ENCODE measurements at regions of chr13 and their contacts with region 1.

Region 1: DNA sequence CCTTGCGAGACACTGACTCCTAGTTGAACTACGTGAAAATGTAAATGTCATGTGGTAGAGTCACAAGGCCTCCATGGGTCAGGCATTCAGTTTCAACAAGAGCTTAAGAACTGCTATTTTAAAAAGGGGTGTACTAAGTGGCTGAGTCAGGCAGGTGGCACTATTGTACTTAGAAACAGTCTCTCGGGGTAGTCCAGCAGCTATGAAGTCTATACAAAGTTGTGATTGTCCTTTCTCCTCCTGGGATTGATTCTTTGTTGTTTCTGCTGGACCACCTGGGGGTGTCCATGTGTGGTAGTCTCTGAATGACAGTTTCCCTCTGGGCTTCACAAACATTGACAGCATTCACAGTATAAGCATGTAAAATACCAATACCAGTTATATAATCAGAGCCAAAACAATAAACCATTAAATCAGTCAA is 33.0 kb downstream of the UGGT2 start:
- DNase-seq: no peak

Region 2: GRCh38 chr13:96817336-96817941 is 797.3 kb after region 1 on chr13:
- intact Hi-C with region 1: loop called (anchors 10 kb)
- DNase-seq: no peak

Region 3: GRCh38 chr13:96958286-96958891 is 938.2 kb after region 1 on chr13:
- intact Hi-C with region 1: loop called (anchors 5 kb)
- DNase-seq: no peak

Measured in cardiac septum (tissue), 1 donor.